ENCODE measurements at regions of chr12 and their contacts with region 1.

Region 1: DNA sequence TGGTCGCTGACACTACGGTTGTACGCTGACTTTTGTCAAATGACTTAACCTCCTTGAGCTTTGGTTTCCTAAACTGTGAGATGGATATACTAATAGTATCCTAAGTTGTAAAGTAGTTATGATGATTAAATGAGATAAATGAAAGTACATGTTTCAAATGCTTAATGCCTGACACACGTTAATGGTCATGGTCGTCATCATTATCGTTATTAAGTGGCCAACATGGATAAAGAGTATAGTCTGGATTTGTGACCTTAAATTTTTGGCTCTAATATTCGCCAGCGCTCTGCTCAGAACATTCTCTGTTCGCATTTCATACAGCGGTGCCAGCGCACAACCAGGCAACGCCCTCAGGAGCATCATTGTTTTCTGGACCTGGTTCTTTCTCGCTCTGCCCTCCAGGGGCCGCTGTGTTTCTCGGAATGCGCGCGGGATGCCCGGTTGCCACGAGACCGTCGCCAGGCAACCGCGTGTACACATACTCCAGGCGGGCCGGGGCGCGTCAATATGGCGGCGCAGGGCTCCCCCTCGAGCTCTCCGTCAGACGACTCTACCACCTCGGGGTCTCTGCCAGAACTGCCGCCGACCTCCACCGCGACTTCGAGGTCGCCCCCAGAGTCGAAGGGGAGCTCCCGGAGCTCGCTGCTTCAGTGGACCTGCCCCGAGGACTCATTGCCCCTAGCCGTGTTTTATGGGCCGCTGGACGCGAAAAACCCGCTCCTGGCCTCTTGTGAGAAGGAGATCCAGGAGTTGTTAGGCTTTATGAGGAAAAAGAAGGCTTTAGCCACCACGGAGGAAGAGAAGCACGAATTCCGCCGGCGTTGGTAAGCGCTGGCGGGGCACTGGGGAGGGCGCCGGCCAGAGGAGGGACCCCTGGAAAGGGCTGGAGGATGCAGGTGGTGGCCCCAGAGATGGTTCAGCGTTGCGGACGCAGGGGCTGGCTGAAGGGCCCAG is at the start of gene CFAP54:
- DNase-seq: peak; percentile 96
- H3K4me3 Mint-ChIP-seq: peak within 1 kb of the TSS; percentile 83
- H3K27ac Mint-ChIP-seq: peak within 1 kb of the TSS; percentile 16
- H3K4me1 Mint-ChIP-seq: peaks cover 36% of the 10 kb centered on the region
- H3K27me3 Mint-ChIP-seq: no peaks in the 10 kb centered on the region
- total RNA-seq, gene CFAP54: 0.31 to 0.33 TPM

Region 2: DNA sequence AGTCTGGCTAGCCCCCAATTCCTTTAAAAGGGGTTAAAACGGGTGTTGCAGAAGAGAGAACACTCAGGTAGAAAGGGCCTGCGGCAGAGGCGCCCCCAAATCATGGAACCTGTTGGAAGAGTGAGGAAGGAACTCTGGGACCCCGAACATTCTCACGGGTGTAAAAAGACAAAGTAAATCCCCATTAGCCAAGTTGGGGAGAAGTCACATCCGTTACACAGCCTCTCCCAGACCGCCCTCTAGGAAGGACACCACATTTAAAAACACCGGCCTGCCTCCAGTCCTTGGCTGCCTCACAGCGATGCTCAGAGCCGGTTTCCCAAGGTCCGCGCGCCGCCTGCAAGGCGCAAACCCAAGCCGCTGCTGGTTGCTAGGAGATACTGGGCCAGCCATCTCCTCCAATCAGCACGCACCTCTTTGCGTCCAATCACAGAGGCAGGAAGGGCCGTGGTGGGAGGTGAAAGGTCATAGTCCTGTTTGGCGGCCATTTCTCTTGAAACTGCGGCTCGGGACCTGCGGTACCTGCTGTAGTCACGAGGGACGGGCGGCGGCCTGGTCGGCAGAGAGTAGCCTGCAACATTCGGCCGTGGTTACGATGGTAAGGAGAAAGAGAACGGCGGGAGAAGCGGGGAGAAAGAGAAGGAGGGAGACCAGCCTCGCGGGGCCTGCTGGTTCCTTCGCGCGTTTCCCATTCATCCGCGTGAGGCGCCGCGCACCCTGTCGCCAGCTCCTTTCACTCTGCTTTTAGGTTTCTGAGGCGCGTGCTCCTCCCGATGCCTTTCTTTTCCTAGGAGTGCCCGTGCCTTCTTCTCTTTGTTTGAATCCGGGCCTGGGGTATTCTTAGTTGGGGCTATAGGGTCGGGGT is 630.7 kb before region 1 on chr12 and contains the start of gene SNRPF:
- CTCF ChIA-PET with region 1: no interaction called
- POLR2A ChIA-PET with region 1: no interaction called
- intact Hi-C with region 1: loop called (anchors 10 kb)
- DNase-seq: peak; percentile 97
- H3K4me3 Mint-ChIP-seq: no peak within 1 kb of the TSS
- H3K27ac Mint-ChIP-seq: no peak within 1 kb of the TSS
- H3K4me1 Mint-ChIP-seq: peaks cover 38% of the 10 kb centered on the region
- H3K27me3 Mint-ChIP-seq: peaks cover 5% of the 10 kb centered on the region
- total RNA-seq, gene SNRPF: 45.4 to 46.0 TPM

Region 3: DNA sequence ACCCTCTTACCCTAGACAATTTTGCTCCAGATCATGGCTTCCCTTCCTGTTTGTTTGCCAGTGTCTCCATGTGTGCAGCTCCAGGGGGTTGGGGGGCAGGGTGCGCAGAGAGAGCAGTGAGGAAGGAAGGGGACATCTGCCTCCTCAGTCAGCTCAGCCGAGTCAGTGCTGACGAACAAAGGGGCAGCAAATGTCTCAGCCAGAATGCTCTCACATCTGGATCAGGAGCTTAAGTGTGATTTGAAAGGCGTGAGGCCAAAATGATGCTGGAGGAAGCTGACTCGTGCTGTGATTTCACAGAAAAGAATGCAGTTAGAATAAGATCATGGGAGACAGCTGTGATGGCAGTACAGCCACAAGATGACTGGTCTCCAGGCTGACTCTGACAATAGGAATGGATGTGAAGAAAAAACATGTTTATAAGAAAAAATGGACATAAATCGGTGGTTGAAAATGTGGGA is 62.1 kb before region 1 on chr12:
- CTCF ChIA-PET with region 1: interaction called, 8 read pairs
- POLR2A ChIA-PET with region 1: no interaction called
- intact Hi-C with region 1: loop called (anchors 1 kb)
- DNase-seq: peak; percentile 76
- H3K4me3 Mint-ChIP-seq: peak overlapping the region; percentile 17
- H3K27ac Mint-ChIP-seq: peak overlapping the region; percentile 79
- H3K4me1 Mint-ChIP-seq: peaks cover 47% of the 10 kb centered on the region
- H3K27me3 Mint-ChIP-seq: no peaks in the 10 kb centered on the region

Region 4: DNA sequence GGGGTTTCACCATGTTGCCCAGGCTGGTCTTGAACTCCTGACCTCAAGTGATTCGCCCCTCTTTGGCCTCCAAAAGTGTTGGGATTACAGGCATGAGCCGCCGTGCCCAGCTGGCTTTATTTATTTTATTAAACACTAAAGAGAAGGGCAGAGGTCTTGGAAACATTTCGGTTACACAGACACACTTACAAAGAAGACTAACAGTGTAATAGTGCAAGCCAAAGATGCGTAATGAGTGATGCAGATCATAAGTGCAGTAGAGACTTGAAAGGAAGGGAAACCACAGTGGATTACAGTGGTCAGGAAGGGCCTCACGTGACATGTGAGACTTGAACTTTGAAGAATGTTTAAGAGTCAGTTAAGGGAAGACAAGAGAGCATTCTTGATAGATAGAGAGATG is 55.3 kb before region 1 on chr12:
- CTCF ChIA-PET with region 1: no interaction called
- POLR2A ChIA-PET with region 1: no interaction called
- intact Hi-C with region 1: loop called (anchors 1 kb)
- DNase-seq: peak; percentile 88
- H3K4me3 Mint-ChIP-seq: peak overlapping the region; percentile 4
- H3K27ac Mint-ChIP-seq: peak overlapping the region; percentile 68
- H3K4me1 Mint-ChIP-seq: peaks cover 31% of the 10 kb centered on the region
- H3K27me3 Mint-ChIP-seq: no peaks in the 10 kb centered on the region

Region 5: DNA sequence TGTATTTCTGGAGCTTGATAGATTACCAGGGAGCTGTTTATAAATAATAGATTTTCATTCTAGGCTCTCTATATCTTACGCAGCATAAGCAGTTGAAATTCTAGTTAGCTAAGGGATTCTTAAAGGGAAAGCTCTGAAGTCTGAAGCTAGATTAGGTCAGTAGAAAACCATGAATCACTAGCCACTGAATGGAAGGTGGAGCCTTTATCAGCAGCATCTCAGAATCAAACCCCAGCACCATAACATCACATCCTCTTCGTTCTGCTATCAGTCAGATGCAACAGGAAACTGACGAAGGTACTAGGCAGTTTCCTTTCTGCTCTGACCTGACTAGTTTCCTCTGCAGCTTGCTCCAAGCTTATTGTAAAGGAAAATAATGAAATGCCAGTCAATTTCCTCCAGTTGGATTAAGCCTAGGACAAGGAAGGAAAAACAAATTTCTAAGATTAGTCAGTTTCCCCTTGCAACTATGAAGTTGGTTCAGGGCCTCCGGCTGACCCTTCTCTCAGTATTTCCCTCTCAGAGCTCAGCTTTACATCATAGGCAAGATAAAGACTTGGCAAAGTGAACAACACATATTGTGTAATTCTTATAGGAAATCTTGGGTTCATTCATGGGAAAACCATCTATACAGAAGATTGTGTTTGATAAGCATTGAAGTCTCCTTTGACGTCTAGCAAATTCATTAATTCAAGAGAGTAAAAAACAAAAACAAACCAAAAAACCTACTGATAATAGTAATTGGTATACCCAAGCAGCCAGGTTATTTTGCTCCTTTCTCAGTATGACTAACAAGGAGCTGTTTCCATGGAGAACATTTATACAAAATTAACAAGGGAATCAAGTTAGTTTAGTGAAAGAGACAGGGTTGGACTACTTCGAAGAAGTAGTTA is 43.4 kb before region 1 on chr12:
- CTCF ChIA-PET with region 1: interaction called, 25 read pairs
- POLR2A ChIA-PET with region 1: interaction called, 3 read pairs
- intact Hi-C with region 1: loop called (anchors 1 kb)
- DNase-seq: peak; percentile 72
- H3K4me3 Mint-ChIP-seq: peak overlapping the region; percentile 60
- H3K27ac Mint-ChIP-seq: peak overlapping the region; percentile 95
- H3K4me1 Mint-ChIP-seq: peaks cover 38% of the 10 kb centered on the region
- H3K27me3 Mint-ChIP-seq: no peaks in the 10 kb centered on the region

Region 6: GRCh38 chr12:96501139-96501761 is 11.9 kb after region 1 on chr12:
- CTCF ChIA-PET with region 1: interaction called, 9 read pairs
- POLR2A ChIA-PET with region 1: no interaction called
- intact Hi-C with region 1: loop called (anchors 1 kb)
- DNase-seq: peak; percentile 56
- H3K4me3 Mint-ChIP-seq: no peak overlapping the region
- H3K27ac Mint-ChIP-seq: peak overlapping the region; percentile 84
- H3K4me1 Mint-ChIP-seq: peaks cover 39% of the 10 kb centered on the region
- H3K27me3 Mint-ChIP-seq: no peaks in the 10 kb centered on the region

Region 7: GRCh38 chr12:96571101-96571862 is 81.9 kb after region 1 on chr12:
- CTCF ChIA-PET with region 1: no interaction called
- POLR2A ChIA-PET with region 1: no interaction called
- intact Hi-C with region 1: loop called (anchors 1 kb)
- DNase-seq: peak; percentile 33
- H3K4me3 Mint-ChIP-seq: peak overlapping the region; percentile 40
- H3K27ac Mint-ChIP-seq: peak overlapping the region; percentile 65
- H3K4me1 Mint-ChIP-seq: peaks cover 26% of the 10 kb centered on the region
- H3K27me3 Mint-ChIP-seq: peaks cover 4% of the 10 kb centered on the region

Region 8: GRCh38 chr12:97159362-97159761 is 670.0 kb after region 1 on chr12:
- CTCF ChIA-PET with region 1: no interaction called
- POLR2A ChIA-PET with region 1: no interaction called
- intact Hi-C with region 1: no loop called
- DNase-seq: no peak
- H3K4me3 Mint-ChIP-seq: no peak overlapping the region
- H3K27ac Mint-ChIP-seq: no peak overlapping the region
- H3K4me1 Mint-ChIP-seq: no peaks in the 10 kb centered on the region
- H3K27me3 Mint-ChIP-seq: peaks cover 4% of the 10 kb centered on the region

Measured in activated CD4-positive, alpha-beta memory T cell treated with anti-CD3 and anti-CD28 coated beads for 36 hours (primary cell).